ENCODE measurements at regions of chr5 and their contacts with region 1.

Region 1: DNA sequence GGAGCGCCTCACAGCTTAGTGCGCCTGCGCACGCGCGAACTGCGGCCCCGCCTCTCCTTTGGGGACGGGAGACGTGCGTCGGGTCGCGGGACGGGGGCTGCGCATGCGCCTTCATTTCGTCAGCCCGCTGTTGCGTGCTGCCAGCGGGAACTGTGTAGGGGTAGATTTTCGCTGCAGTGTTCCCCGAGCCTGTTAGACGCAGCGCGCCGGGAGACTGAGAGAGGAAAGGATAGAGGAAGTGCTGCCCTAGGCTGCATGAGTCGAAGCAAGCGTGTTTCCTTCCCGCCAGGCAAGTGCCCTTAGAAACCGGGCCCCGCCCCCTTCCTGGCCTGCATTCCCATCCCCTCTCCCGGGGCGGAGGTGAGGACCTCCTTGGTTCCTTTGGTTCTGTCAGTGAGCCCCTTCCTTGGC is 12.3 kb downstream of the ITGA1 start:
- DNase-seq: peak; percentile 94
- ATAC-seq: peak; percentile 76
- H3K4me3 Mint-ChIP-seq: peak overlapping the region; percentile 91
- H3K27ac Mint-ChIP-seq: peak overlapping the region; percentile 99
- H3K4me1 Mint-ChIP-seq: peaks cover 57% of the 10 kb centered on the region
- H3K27me3 Mint-ChIP-seq: no peaks in the 10 kb centered on the region
- CTCF ChIP-seq: no peak

Region 2: DNA sequence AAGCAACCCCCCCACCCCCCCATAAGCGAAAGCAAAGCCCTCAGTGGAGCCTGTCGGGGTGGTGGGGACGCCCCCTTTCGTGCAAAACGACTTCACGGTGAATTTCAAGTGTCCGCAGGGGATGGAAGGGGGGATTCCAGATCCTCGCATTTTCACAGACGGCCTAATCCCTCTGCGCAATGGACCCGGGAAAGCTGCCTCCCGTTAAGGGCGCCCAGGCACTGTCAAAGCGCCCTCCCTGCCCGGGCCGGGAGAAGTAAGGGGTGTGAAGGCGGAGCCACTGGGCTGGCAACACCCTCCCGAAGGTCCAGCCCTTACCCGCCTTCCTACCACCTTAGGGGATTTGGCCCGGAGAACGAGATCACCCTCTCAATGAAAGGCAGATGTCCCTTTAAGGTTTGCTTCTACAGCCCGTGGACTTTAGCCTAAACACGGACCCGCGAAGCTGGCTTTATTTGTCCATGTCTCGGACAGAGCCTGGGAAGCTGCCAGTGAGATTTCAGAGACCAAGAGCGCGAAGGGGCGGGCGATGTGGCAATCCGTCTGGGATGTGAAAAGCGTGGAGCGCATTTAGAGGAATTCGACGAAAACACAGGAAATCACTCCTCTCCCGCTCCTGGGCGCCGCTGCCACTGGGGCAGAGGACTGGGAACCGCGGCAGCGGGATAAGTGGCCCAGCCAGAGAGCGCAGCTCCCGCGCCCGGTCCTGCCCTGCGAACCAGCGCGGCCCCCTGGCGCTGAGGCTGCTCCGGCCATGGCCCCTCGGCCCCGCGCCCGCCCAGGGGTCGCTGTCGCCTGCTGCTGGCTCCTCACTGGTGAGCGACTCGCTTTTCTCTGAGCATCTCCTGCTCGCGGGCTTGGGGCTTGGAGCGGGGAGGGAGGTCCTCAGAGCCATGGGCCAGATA is 12.1 kb before region 1 on chr5 and contains the starts of genes ITGA1 and PELO:
- CTCF ChIA-PET with region 1: interaction called, 25 read pairs
- POLR2A ChIA-PET with region 1: interaction called, 10 read pairs
- DNase-seq: peak; percentile 77
- ATAC-seq: peak; percentile 92
- H3K4me3 Mint-ChIP-seq: peak within 1 kb of the TSS; percentile 93
- H3K27ac Mint-ChIP-seq: peak within 1 kb of the TSS; percentile 95
- H3K4me1 Mint-ChIP-seq: peaks cover 31% of the 10 kb centered on the region
- H3K27me3 Mint-ChIP-seq: peaks cover 4% of the 10 kb centered on the region; the same call in 1 of the 2 replicates
- CTCF ChIP-seq: no peak
- total RNA-seq, gene ITGA1: 4.1 to 6.5 TPM (median 4.6 TPM) in 3 replicates
- total RNA-seq, gene PELO: 13.6 to 18.7 TPM (median 17.8 TPM) in 3 replicates

Region 3: GRCh38 chr5:52840277-52841050 is 40.5 kb after region 1 on chr5:
- CTCF ChIA-PET with region 1: no interaction called
- POLR2A ChIA-PET with region 1: no interaction called
- DNase-seq: no peak
- ATAC-seq: no peak
- H3K4me3 Mint-ChIP-seq: no peak overlapping the region
- H3K27ac Mint-ChIP-seq: no peak overlapping the region
- H3K4me1 Mint-ChIP-seq: no peaks in the 10 kb centered on the region
- H3K27me3 Mint-ChIP-seq: no peaks in the 10 kb centered on the region
- CTCF ChIP-seq: no peak

Measured in WTC11 (cell line).